ENCODE measurements at regions of chr1 and their contacts with region 1.

Region 1: GRCh38 chr1:199243423-199244061 is 604.7 kb downstream of the PTPRC start:
- DNase-seq: peak; percentile 87
- H3K4me3 Mint-ChIP-seq: no peak overlapping the region
- H3K27ac Mint-ChIP-seq: no peak overlapping the region
- H3K4me1 Mint-ChIP-seq: no peaks in the 10 kb centered on the region
- H3K27me3 Mint-ChIP-seq: peaks cover 4% of the 10 kb centered on the region

Region 2: GRCh38 chr1:198771563-198772153 is 471.9 kb before region 1 on chr1:
- CTCF ChIA-PET with region 1: interaction called, 5 read pairs
- POLR2A ChIA-PET with region 1: no interaction called
- intact Hi-C with region 1: loop called (anchors 5 kb)
- DNase-seq: no peak
- H3K4me3 Mint-ChIP-seq: no peak overlapping the region
- H3K27ac Mint-ChIP-seq: no peak overlapping the region
- H3K4me1 Mint-ChIP-seq: peaks cover 3% of the 10 kb centered on the region
- H3K27me3 Mint-ChIP-seq: no peaks in the 10 kb centered on the region

Region 3: DNA sequence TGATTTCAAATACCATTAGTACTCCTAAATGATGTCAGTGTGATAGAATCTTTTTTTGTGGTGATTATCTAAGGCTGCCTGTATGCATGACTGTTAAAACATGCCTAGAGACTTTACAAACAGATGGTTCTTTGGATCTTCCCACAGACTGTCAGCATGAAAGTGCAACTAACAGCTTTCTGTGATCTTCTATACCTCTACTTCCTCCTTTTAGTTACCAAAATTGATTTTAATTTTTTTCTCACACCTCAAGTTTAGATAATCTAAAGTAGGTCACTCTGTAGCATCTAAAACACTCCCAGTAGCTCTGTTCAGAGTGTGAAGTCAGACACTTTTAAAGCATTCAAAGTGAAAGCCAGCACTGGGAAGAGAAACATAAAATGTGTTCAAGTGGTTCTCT is 70.2 kb before region 1 on chr1:
- CTCF ChIA-PET with region 1: no interaction called
- POLR2A ChIA-PET with region 1: no interaction called
- intact Hi-C with region 1: loop called (anchors 5 kb)
- DNase-seq: no peak
- H3K4me3 Mint-ChIP-seq: no peak overlapping the region
- H3K27ac Mint-ChIP-seq: no peak overlapping the region
- H3K4me1 Mint-ChIP-seq: peaks cover 49% of the 10 kb centered on the region
- H3K27me3 Mint-ChIP-seq: no peaks in the 10 kb centered on the region

Region 4: DNA sequence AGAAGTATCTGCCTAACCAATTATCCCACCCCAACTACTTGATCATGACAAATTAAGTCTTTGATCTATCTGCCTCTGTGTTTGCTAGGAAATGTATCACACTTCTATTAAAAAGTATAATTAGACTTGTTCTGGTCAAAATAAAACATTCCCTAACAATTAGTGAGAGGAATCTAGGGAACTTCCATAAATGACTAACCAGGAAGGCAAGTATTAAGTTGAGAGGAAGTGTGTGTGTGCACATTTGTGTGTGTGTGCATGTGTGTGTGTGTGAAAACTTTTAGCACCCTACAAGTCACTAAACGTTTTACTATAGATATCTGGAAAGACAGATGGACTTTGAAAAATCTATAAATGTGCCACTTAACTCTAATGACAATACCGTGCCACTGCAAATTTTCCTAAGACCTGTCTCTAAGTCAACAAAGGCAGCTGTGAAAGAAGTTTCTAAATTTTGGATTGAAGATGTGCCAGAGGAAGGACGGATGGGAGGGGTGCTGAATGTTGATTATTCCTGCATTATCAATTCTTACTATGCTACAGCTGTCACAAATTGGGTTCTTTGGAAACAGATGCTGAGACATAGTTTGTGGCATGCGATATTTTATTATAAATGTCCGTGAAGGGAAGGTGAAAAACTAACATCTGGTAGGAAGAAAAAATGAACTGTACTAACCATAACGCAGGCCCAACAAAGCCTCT is 37.7 kb before region 1 on chr1:
- CTCF ChIA-PET with region 1: interaction called, 3 read pairs
- POLR2A ChIA-PET with region 1: no interaction called
- intact Hi-C with region 1: loop called (anchors 5 kb)
- DNase-seq: no peak
- H3K4me3 Mint-ChIP-seq: no peak overlapping the region
- H3K27ac Mint-ChIP-seq: no peak overlapping the region
- H3K4me1 Mint-ChIP-seq: no peaks in the 10 kb centered on the region
- H3K27me3 Mint-ChIP-seq: no peaks in the 10 kb centered on the region

Region 5: DNA sequence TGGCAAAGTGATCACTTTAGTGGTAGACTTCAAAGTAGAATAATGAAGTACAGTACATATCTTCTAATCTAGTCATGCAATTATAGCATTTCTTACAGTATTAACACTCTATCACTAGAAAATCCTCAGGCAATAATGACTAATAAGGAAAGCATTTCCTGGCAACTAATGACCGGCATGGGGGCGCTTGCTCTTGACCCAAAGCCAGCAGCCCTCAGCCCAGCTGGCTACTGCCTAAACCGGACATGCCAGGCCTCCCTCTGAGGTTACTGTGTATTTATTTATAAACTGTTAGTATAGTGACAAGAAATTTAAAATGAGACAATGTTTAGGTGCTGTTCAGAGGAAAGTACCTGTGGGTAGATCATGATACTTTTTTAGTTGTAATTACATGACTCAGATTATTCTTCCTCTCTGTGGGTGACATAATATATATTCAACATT is 29.1 kb after region 1 on chr1:
- CTCF ChIA-PET with region 1: no interaction called
- POLR2A ChIA-PET with region 1: no interaction called
- intact Hi-C with region 1: no loop called
- DNase-seq: no peak
- H3K4me3 Mint-ChIP-seq: no peak overlapping the region
- H3K27ac Mint-ChIP-seq: no peak overlapping the region
- H3K4me1 Mint-ChIP-seq: peaks cover 5% of the 10 kb centered on the region
- H3K27me3 Mint-ChIP-seq: no peaks in the 10 kb centered on the region